Esophagus squamous epithelium (tissue), 5 donors: ENCODE measurements at regions of chr6 and their contacts with region 1.

Region 1: GRCh38 chr6:24385536-24386269 is 17.0 kb upstream of the MRS2 start:
- DNase-seq: no peak
- H3K4me3 ChIP-seq: no peak overlapping the region
- H3K27ac ChIP-seq: no peak overlapping the region
- H3K4me1 ChIP-seq: peaks cover 0 to 4% (median 0%) of the 10 kb centered on the region in 3 donors
- H3K27me3 ChIP-seq: no peaks in the 10 kb centered on the region
- CTCF ChIP-seq: no peak
- POLR2A ChIP-seq: no peak

Region 2: GRCh38 chr6:24214922-24215452 is 170.7 kb before region 1 on chr6:
- intact Hi-C with region 1: no loop called
- DNase-seq: no peak
- H3K4me3 ChIP-seq: no peak overlapping the region
- H3K27ac ChIP-seq: no peak overlapping the region
- H3K4me1 ChIP-seq: no peaks in the 10 kb centered on the region
- H3K27me3 ChIP-seq: no peaks in the 10 kb centered on the region
- CTCF ChIP-seq: no peak
- POLR2A ChIP-seq: no peak

Region 3: DNA sequence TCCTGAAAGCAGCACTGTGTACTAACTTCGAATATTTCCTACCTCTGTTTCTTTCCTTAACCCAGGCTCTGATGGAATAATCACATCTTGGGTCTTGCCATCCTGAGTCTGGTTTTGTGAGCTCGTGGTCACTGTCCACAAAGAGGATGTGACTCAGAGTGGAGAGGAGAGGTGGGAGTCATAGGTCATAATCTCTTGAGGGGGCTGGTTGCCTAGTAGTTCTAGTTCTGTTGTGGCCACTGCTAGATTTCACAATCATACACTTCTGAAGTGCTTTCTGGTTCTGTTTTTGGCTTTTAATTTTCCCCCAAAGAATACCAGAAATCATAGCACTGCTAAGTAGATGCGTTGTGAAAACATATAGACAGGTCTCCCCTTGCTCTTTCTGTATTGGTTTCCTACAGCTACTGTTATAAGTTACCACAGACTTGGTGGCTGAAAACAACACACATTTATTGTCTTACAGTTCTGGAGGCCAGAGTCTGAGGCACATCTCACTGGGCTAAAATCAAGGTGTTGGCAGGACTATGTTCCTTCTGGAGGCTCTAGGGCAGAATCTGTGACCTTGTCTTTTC is 156.9 kb before region 1 on chr6:
- intact Hi-C with region 1: no loop called
- DNase-seq: no peak
- H3K4me3 ChIP-seq: no peak overlapping the region
- H3K27ac ChIP-seq: no peak overlapping the region
- H3K4me1 ChIP-seq: peaks cover 0 to 4% (median 0%) of the 10 kb centered on the region in 3 donors
- H3K27me3 ChIP-seq: no peaks in the 10 kb centered on the region
- CTCF ChIP-seq: no peak
- POLR2A ChIP-seq: no peak

Region 4: DNA sequence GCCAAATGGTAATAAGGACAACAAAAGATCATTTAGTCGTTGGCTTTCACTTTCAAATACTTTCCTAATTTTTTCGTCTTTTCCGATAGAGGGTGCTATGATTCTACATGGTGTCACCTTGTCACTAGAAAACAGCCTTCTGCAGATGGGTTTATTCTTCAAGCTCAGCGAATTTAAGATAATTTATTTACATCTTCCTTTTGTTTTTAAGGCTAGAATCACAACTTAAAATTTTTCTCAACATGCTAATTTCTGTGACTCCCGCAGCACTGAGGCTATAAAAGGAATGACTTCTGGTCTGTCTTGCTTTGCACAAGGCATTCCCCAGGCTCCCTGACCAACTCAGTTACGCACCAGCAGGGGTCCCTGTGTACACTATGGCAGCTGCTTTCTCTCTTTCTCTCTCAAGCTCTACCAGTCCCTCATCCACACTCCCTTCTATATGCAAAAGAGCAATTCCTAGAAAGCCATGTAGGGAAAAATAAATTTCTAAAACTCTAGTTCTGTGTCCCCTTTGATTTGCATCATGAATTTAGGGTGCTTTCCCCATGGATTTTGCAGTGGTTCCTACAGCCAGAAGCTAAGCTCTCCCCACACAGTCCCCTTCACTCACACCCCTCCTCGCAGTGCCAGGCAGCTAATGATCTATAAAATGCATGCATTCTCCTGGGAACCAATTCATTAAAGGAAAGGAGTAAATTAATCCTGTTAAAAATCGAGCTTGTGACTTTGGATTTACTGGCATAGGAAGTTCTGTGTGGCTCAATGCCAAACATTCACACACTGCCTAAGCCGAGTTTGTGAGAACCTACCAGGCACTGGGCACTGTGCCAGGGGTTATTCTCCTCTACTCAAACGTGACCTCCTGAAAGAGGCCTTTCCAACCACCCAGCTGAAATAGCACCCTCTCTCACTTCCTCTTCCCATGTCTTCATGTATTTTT is 102.4 kb before region 1 on chr6:
- intact Hi-C with region 1: loop called (anchors 10 kb)
- DNase-seq: no peak
- H3K4me3 ChIP-seq: peak overlapping the region in 2 of 4 donors; percentile 0 to 33
- H3K27ac ChIP-seq: no peak overlapping the region
- H3K4me1 ChIP-seq: peaks cover 0 to 11% (median 0%) of the 10 kb centered on the region in 3 donors
- H3K27me3 ChIP-seq: peaks cover 0 to 16% (median 0%) of the 10 kb centered on the region in 4 donors
- CTCF ChIP-seq: peak in 5 of 6 experiments; percentile 24 to 64 (median 40)
- POLR2A ChIP-seq: no peak